ENCODE measurements at regions of chr15 and their contacts with region 1.

Region 1: GRCh38 chr15:101277038-101277882 is at the start of gene SELENOS:
- DNase-seq: peak; percentile 81 to 89 (median 85)
- H3K4me3 ChIP-seq: peak within 1 kb of the TSS; percentile 74 to 93
- H3K4me3 Mint-ChIP-seq: peak within 1 kb of the TSS; percentile 93 to 97 (median 94)
- H3K27ac ChIP-seq: peak within 1 kb of the TSS; percentile 89
- H3K27ac Mint-ChIP-seq: peak within 1 kb of the TSS; percentile 91 to 99 (median 96)
- H3K4me1 ChIP-seq: peaks cover 25% of the 10 kb centered on the region
- H3K4me1 Mint-ChIP-seq: peaks cover 11 to 43% (median 21%) of the 10 kb centered on the region in 4 donors
- H3K27me3 ChIP-seq: no peaks in the 10 kb centered on the region
- H3K27me3 Mint-ChIP-seq: no peaks in the 10 kb centered on the region
- total RNA-seq, gene SELENOS: 49.1 to 53.8 TPM

Region 2: DNA sequence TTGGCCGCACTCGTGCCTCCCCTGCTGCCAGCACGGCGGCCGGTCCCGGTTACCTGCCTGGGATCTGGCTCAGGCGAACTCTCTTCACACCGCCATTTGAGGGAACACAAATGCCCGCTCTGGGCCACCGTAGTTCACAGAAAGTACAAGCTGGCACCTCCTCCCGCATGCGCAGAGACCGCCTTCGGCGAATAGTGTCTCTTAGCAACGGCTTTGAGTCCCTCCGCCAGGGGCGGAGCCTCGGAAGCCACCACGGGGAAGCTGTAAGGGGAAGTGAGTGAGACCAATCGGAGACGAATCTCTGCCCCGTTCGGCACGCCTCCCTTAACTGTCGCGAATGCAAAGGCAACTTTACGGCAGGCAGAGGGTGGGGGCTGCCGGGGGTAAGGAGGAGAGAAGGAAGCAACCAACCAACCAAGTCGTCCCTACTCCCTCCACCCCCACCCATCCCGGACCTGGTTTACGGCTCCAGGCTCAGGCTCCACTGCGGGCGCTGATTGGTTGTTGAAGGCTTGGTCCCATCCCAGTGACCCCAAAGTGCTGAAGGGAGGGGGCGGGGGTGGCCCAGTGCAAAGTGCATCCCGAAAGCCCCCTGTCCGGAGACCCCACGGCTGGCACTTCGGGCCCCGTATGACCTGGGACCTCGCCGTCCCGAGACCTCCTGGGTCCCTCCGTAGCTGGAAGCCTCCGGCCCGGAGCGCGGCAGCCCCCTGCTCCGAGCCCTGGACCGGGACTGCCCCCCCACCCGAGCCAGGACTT is 675.0 kb before region 1 on chr15 and contains the starts of genes ASB7 and LINS1:
- CTCF ChIA-PET with region 1: no interaction called
- POLR2A ChIA-PET with region 1: no interaction called
- intact Hi-C with region 1: no loop called
- DNase-seq: peak; percentile 99 to 100 (median 100)
- H3K4me3 ChIP-seq: peak within 1 kb of the TSS; percentile 85 to 97
- H3K4me3 Mint-ChIP-seq: no peak within 1 kb of the TSS
- H3K27ac ChIP-seq: peak within 1 kb of the TSS; percentile 95
- H3K27ac Mint-ChIP-seq: peak within 1 kb of the TSS in 6 of 7 donors; percentile 89 to 98 (median 94)
- H3K4me1 ChIP-seq: peaks cover 58% of the 10 kb centered on the region
- H3K4me1 Mint-ChIP-seq: peaks cover 36 to 56% (median 51%) of the 10 kb centered on the region in 4 donors
- H3K27me3 ChIP-seq: no peaks in the 10 kb centered on the region
- H3K27me3 Mint-ChIP-seq: no peaks in the 10 kb centered on the region
- total RNA-seq, gene ASB7: 19.5 to 20.0 TPM
- total RNA-seq, gene LINS1: 76.4 to 84.0 TPM

Region 3: GRCh38 chr15:101288908-101289513 is 11.8 kb after region 1 on chr15:
- CTCF ChIA-PET with region 1: interaction called, 27 read pairs
- POLR2A ChIA-PET with region 1: interaction called, 8 read pairs
- intact Hi-C with region 1: loop called (anchors 1 kb)
- DNase-seq: peak in 4 of 5 donors; percentile 62 to 67 (median 63)
- H3K4me3 ChIP-seq: no peak overlapping the region
- H3K4me3 Mint-ChIP-seq: peak overlapping the region in 2 of 8 donors; percentile 57 to 70
- H3K27ac ChIP-seq: no peak overlapping the region
- H3K27ac Mint-ChIP-seq: peak overlapping the region; percentile 36 to 94 (median 79)
- H3K4me1 ChIP-seq: peaks cover 45% of the 10 kb centered on the region
- H3K4me1 Mint-ChIP-seq: peaks cover 31 to 49% (median 41%) of the 10 kb centered on the region in 4 donors
- H3K27me3 ChIP-seq: no peaks in the 10 kb centered on the region
- H3K27me3 Mint-ChIP-seq: no peaks in the 10 kb centered on the region